ENCODE measurements at regions of chr4 and their contacts with region 1.

Region 1: GRCh38 chr4:181752516-181752915 is 490.7 kb upstream of the TENM3 start:
- DNase-seq: no peak
- ATAC-seq: no peak
- H3K4me3 ChIP-seq: no peak overlapping the region
- H3K27ac ChIP-seq: no peak overlapping the region
- H3K4me1 ChIP-seq: no peaks in the 10 kb centered on the region
- H3K27me3 ChIP-seq: no peaks in the 10 kb centered on the region
- CTCF ChIP-seq: no peak

Region 2: GRCh38 chr4:181150191-181150590 is 602.3 kb before region 1 on chr4:
- CTCF ChIA-PET with region 1: no interaction called
- POLR2A ChIA-PET with region 1: no interaction called
- in situ Hi-C with region 1: no loop called
- intact Hi-C with region 1: no loop called
- DNase-seq: no peak
- ATAC-seq: no peak
- H3K4me3 ChIP-seq: no peak overlapping the region
- H3K27ac ChIP-seq: no peak overlapping the region
- H3K4me1 ChIP-seq: no peaks in the 10 kb centered on the region
- H3K27me3 ChIP-seq: no peaks in the 10 kb centered on the region
- CTCF ChIP-seq: no peak

Region 3: DNA sequence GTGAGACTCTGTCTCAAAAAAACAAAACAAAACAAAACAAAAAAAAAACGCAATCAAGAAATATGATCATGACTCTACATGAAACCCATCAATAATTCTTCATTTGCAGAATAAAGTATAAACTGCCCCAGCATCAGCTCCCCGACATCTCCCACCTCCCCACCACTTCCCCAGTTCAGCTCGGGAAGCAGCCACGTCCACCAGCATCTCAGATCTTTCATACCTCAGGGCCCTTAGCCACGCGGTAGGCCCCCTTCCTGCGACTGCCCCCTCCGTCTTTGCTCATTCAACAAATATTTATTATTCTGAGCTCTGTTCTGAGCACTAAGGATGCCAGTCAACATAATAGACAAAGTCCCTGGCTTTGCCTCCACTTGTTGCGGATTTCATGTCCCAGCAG is 1119.1 kb after region 1 on chr4:
- CTCF ChIA-PET with region 1: no interaction called
- POLR2A ChIA-PET with region 1: interaction called, 13 read pairs
- in situ Hi-C with region 1: no loop called
- intact Hi-C with region 1: no loop called
- DNase-seq: no peak
- ATAC-seq: no peak
- H3K4me3 ChIP-seq: no peak overlapping the region
- H3K27ac ChIP-seq: no peak overlapping the region
- H3K4me1 ChIP-seq: no peaks in the 10 kb centered on the region
- H3K27me3 ChIP-seq: no peaks in the 10 kb centered on the region
- CTCF ChIP-seq: no peak